Upper lobe of right lung (tissue), 1 donor: ENCODE measurements at regions of chr1 and their contacts with region 1.

Region 1: GRCh38 chr1:205591522-205592351 is 40.1 kb downstream of the ELK4 start:
- DNase-seq: peak; percentile 93
- ATAC-seq: peak; percentile 97
- H3K4me3 ChIP-seq: peak overlapping the region; percentile 49
- H3K27ac ChIP-seq: no peak overlapping the region
- H3K4me1 ChIP-seq: peaks cover 15% of the 10 kb centered on the region
- H3K27me3 ChIP-seq: no peaks in the 10 kb centered on the region
- CTCF ChIP-seq: peak; percentile 95

Region 2: DNA sequence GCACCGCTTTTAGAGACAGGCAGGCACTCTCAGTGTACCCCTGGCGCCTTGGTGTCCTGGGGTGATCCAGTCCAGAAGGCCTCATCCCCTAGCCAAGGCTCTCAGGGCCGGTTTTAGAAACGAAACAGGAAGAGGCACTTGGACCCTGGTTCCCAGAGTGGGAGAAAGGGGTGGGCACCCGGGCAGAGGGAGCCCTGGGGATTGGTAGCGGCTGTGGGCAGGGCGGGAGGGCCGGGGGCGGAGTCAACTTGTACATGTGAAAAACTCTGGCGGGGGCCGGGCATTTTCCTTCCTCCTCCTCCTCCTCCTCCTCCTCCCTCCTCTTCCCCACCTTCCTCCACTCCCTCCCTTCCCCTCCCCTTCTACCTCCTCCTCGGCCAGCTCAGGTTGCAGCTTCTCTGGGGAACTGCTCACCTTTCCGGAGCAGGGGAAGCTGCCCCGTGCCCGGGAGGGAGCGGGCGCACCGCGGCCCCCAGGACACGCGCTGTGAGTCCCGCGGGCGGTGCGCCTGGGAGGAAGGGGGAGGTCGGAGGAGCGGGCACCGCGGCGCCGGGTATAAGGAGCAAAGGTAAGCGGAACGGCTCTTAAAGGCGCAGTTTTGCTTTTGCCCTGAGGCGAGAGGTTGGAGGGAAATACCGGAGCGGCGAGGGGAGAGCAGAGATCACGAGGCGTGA is 87.3 kb before region 1 on chr1 and contains the start of gene CDK18:
- intact Hi-C with region 1: no loop called
- DNase-seq: peak; percentile 96
- ATAC-seq: peak; percentile 92
- H3K4me3 ChIP-seq: peak within 1 kb of the TSS; percentile 74
- H3K27ac ChIP-seq: peak within 1 kb of the TSS; percentile 77
- H3K4me1 ChIP-seq: peaks cover 16% of the 10 kb centered on the region
- H3K27me3 ChIP-seq: no peaks in the 10 kb centered on the region
- CTCF ChIP-seq: no peak
- total RNA-seq, gene CDK18: 31.6 TPM

Region 3: DNA sequence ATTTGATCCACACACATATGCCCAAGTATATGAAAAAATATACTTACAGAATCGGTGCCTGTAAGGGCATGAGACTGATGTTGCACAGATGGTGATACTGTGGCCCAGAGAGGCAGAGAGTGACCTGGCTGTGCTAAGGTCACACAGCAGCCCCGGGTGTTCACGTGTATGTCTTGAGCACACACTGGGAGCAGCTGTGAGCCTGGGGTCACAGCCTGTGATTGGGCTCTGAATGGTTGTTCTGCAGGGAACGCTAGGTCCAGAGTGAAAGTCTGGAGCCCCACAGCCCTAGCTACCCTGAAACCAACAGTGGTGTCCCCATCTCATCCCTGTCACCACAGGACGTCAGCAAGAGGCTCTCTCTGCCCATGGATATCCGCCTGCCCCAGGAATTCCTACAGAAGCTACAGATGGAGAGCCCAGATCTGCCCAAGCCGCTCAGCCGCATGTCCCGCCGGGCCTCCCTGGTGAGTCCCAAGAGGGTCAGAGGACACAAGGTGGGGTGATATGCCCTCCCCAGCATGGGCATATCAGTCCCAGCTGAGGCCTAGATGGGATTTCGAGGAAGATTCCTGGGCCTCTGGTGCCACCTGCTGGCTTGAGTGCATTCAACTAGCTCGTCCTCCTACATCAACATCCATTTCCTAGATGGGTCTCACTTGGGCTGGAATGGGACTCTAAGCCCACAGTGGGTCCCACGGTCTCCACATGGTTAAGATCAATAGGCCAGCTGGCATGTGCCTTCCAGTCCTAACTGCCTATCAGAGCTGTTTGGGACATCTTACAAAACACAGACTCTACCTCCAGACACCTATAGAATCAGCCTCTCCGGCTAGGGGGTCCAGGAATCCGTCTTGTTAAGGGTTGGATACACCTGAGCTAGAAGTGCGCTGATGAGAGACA is 67.6 kb before region 1 on chr1:
- intact Hi-C with region 1: no loop called
- DNase-seq: peak; percentile 83
- ATAC-seq: peak; percentile 67
- H3K4me3 ChIP-seq: no peak overlapping the region
- H3K27ac ChIP-seq: no peak overlapping the region
- H3K4me1 ChIP-seq: no peaks in the 10 kb centered on the region
- H3K27me3 ChIP-seq: no peaks in the 10 kb centered on the region
- CTCF ChIP-seq: peak; percentile 76

Region 4: DNA sequence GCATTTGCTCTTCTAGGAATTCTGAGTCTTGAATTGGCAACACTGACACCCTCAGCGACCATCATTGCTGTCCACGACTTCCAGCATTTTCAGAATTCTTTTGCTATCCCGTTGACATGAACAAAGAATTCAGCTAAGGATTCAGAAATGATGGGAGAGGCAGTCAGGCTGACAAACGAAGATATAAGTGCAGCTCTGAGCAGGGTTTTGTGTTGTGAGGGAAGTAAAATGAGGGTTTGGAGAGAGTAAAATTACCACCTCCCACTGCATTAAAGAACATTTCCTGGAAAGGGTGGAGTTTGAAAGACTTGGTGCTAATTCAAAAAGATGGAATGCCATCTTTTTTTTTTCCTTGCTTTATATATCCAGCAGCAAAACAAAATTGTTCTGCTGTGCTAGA is 45.0 kb after region 1 on chr1:
- intact Hi-C with region 1: loop called (anchors 5 kb)
- DNase-seq: no peak
- ATAC-seq: no peak
- H3K4me3 ChIP-seq: no peak overlapping the region
- H3K27ac ChIP-seq: peak overlapping the region; percentile 31
- H3K4me1 ChIP-seq: peaks cover 13% of the 10 kb centered on the region
- H3K27me3 ChIP-seq: no peaks in the 10 kb centered on the region
- CTCF ChIP-seq: no peak

Region 5: GRCh38 chr1:205658943-205659581 is 67.3 kb after region 1 on chr1:
- intact Hi-C with region 1: loop called (anchors 5 kb)
- DNase-seq: peak; percentile 89
- ATAC-seq: peak; percentile 89
- H3K4me3 ChIP-seq: no peak overlapping the region
- H3K27ac ChIP-seq: no peak overlapping the region
- H3K4me1 ChIP-seq: peaks cover 3% of the 10 kb centered on the region
- H3K27me3 ChIP-seq: no peaks in the 10 kb centered on the region
- CTCF ChIP-seq: peak; percentile 91

Region 6: GRCh38 chr1:205711104-205712020 is 119.6 kb after region 1 on chr1:
- intact Hi-C with region 1: loop called (anchors 10 kb)
- DNase-seq: no peak
- ATAC-seq: peak; percentile 90
- H3K4me3 ChIP-seq: no peak overlapping the region
- H3K27ac ChIP-seq: no peak overlapping the region
- H3K4me1 ChIP-seq: peaks cover 8% of the 10 kb centered on the region
- H3K27me3 ChIP-seq: no peaks in the 10 kb centered on the region
- CTCF ChIP-seq: peak; percentile 90